Heart right ventricle (tissue), 16 donors: ENCODE measurements at regions of chr16 and their contacts with region 1.

Region 1: GRCh38 chr16:84186685-84187437 is at the start of gene TAF1C:
- DNase-seq: peak; percentile 89 to 94
- ATAC-seq: peak; percentile 92 to 98 (median 95)
- H3K4me3 ChIP-seq: peak within 1 kb of the TSS; percentile 67 to 99 (median 90)
- H3K27ac ChIP-seq: peak within 1 kb of the TSS; percentile 64 to 90 (median 85)
- H3K4me1 ChIP-seq: peaks cover 15 to 45% (median 22%) of the 10 kb centered on the region in 9 donors
- H3K27me3 ChIP-seq: no peaks in the 10 kb centered on the region
- CTCF ChIP-seq: peak; percentile 91 to 99 (median 98)
- total RNA-seq, gene TAF1C: 14.2 to 34.0 (median 20.9) TPM

Region 2: DNA sequence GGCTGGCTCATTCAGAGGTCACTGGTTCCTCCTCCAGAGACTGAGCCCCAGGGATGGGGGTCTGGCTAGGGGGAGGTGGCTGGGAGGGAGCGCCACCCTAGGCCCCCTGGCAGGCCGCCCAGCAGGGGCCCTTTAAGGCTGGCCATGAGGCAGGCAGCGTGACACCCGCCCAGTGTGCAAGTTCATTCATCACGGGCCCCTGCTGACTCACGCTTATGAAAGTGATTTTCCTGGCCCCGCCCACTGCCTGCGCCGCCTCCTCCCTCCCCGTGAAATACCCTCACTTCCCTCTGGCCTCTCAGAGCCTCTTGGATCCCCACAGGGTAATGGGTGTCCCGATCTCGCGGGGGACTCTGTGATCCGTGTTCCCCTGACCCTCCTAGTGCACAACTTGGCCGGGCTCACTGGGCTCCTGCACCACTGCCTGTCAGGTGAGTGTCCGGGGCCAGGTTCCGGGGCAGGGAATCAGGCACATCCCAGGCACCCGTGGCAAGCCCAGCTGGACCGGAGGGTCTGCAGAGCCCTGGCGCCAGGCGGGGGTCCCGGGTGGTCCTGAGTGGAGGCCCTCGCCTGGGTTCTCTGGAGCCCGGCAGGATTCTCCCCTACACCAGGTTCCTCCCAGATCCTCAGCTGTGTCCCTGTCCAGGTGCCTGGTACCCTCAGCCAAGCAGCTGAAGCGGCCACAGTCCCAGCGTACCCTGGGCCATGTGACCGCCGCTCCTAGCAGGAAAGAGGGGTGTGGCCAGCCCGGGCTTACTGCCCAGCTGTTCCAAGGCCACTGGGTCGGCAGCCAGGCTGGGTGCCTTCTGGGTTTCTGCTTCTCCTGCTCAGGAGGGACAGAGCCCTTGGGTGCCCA is 233.7 kb before region 1 on chr16 and contains the start of gene OSGIN1:
- intact Hi-C with region 1: loop called in 3 of 10 experiments (anchors 5 kb)
- DNase-seq: peak; percentile 90 to 94
- ATAC-seq: peak; percentile 90 to 96 (median 94)
- H3K4me3 ChIP-seq: peak within 1 kb of the TSS; percentile 43 to 73 (median 63)
- H3K27ac ChIP-seq: peak within 1 kb of the TSS; percentile 78 to 97 (median 92)
- H3K4me1 ChIP-seq: peaks cover 11 to 45% (median 31%) of the 10 kb centered on the region in 9 donors
- H3K27me3 ChIP-seq: no peaks in the 10 kb centered on the region
- CTCF ChIP-seq: no peak
- total RNA-seq, gene OSGIN1: 3.2 to 14.5 (median 5.3) TPM

Region 3: DNA sequence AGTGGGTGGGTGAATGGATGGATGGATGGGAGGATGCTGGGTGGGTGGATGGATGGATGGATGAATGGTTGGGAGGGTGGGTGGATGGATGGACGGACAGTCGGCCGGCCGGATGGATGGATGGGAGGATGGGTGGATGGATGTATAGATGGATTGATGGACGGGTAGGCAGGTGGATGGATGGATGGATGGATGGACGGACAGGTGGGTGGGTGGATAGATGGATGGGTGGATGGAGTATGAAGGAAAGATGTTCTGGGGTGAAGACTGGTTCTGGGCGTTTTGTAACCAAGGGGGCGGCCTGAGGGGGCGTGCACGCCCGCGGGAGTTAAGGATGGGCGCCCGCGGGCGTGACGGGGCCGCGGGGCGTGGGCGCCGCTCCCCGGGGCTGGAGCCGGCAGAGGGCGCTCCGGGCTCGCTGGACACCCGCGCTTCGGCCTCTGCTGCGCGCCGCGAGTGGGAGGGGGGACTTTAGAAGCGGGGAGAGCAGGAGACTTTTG is 219.0 kb before region 1 on chr16 and contains the start of gene NECAB2:
- intact Hi-C with region 1: loop called in 2 of 10 experiments (anchors 10 kb)
- DNase-seq: peak; percentile 40 to 62
- ATAC-seq: peak in 6 of 8 donors; percentile 22 to 65 (median 42)
- H3K4me3 ChIP-seq: peak within 1 kb of the TSS in 9 of 10 donors; percentile 29 to 47 (median 38)
- H3K27ac ChIP-seq: no peak within 1 kb of the TSS
- H3K4me1 ChIP-seq: peaks cover 0 to 10% (median 0%) of the 10 kb centered on the region in 9 donors
- H3K27me3 ChIP-seq: peaks cover 0 to 24% (median 8%) of the 10 kb centered on the region in 7 donors
- CTCF ChIP-seq: peak; percentile 33 to 81 (median 69)
- total RNA-seq, gene NECAB2: 0.32 to 1.1 (median 0.90) TPM

Region 4: DNA sequence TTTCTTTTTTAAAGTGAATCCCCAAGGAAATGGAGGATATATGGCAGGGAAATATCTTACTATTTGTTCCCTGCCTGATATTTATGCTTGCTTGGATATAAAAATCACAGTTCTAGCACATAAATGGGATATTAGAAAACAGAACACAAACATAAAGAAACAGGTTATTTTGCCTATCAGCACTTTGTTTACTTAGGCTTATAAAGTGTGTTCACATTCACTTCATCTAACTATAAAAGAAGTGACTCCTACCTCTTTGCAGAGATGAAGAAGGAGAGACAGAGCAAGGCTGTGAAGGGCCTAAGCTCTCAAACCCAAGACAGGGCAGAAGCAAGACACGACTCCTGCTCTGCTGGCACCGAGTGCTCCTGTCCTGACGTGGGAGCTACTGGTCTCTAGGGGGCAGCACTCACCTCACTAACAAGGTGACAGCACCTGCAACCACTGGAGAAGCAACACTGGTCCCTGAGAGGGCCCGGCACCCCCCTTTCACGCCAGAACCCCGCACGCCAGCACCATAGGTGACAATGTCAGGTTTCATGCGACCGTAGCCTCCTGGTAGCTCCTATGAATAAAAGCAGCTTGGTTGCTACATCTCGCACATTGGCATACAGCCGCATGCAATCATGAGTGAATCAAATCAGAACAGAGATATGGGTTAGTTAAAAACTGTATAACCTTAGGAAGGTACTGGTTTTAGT is 102.1 kb before region 1 on chr16:
- intact Hi-C with region 1: loop called in 4 of 10 experiments (anchors 5 kb)
- DNase-seq: peak; percentile 43 to 64
- ATAC-seq: peak in 7 of 8 donors; percentile 9 to 50 (median 40)
- H3K4me3 ChIP-seq: no peak overlapping the region
- H3K27ac ChIP-seq: peak overlapping the region in 6 of 10 donors; percentile 3 to 77 (median 67)
- H3K4me1 ChIP-seq: peaks cover 0 to 54% (median 25%) of the 10 kb centered on the region in 9 donors
- H3K27me3 ChIP-seq: no peaks in the 10 kb centered on the region
- CTCF ChIP-seq: peak; percentile 30 to 74 (median 66)

Region 5: GRCh38 chr16:84116720-84117493 is 70.0 kb before region 1 on chr16 and contains the start of gene MBTPS1:
- intact Hi-C with region 1: loop called in 2 of 10 experiments (anchors 2 kb)
- DNase-seq: peak; percentile 98 to 99
- ATAC-seq: peak; percentile 98 to 100 (median 99)
- H3K4me3 ChIP-seq: peak within 1 kb of the TSS; percentile 73 to 98 (median 88)
- H3K27ac ChIP-seq: peak within 1 kb of the TSS; percentile 76 to 98 (median 93)
- H3K4me1 ChIP-seq: peaks cover 2 to 42% (median 28%) of the 10 kb centered on the region in 9 donors
- H3K27me3 ChIP-seq: no peaks in the 10 kb centered on the region
- CTCF ChIP-seq: peak in 2 of 9 donors; percentile 23 to 32
- total RNA-seq, gene MBTPS1: 55.9 to 122 (median 73.5) TPM

Region 6: GRCh38 chr16:84144859-84145639 is 41.8 kb before region 1 on chr16 and contains the starts of genes DNAAF1 and HSDL1:
- intact Hi-C with region 1: loop called in 2 of 10 experiments (anchors 2 to 5 kb)
- DNase-seq: peak; percentile 90 to 95
- ATAC-seq: peak; percentile 91 to 97 (median 96)
- H3K4me3 ChIP-seq: peak within 1 kb of the TSS; percentile 71 to 99 (median 90)
- H3K27ac ChIP-seq: peak within 1 kb of the TSS in 9 of 10 donors; percentile 65 to 90 (median 81)
- H3K4me1 ChIP-seq: peaks cover 0 to 19% (median 10%) of the 10 kb centered on the region in 9 donors
- H3K27me3 ChIP-seq: peaks cover 0 to 5% (median 0%) of the 10 kb centered on the region in 7 donors
- CTCF ChIP-seq: peak in 5 of 9 donors; percentile 6 to 36 (median 21)
- total RNA-seq, gene DNAAF1: 0.23 to 0.54 (median 0.28) TPM in 3 of 10 donors, not detected in the others
- total RNA-seq, gene HSDL1: 19.4 to 38.5 (median 25.3) TPM

Region 7: DNA sequence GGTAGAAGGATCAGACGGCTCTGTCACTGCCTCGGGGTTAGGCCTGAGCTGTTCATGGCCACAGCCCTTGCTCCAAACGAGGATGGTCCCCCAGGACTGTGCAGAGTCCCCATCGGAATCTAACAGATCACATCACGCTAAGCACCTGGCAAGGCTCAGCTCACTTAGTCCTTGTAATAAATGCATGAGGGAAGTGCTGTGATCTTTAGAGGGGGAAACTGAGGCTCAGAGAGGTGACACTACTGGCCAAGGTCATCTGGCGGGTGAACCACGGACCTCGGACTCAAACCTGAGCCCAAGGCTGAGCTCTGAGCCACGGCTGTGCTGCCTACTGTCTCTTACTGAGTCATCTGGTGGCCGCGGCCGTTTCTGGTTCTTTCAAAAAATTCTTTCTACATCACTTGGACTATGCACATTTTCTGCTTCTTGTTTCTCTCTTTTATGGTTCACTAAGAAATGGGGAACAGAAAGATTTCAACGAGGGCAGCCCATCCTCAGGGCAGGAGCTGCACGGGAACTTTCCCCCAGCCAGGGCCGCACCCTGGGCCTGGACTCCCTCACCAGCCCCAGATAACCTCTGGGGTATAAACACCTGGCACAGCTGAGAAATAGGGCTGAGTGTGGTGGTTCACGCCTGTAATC is 375.4 kb after region 1 on chr16:
- intact Hi-C with region 1: no loop called
- DNase-seq: no peak
- ATAC-seq: peak in 1 of 8 donors; percentile 25
- H3K4me3 ChIP-seq: no peak overlapping the region
- H3K27ac ChIP-seq: peak overlapping the region in 1 of 10 donors; percentile 75
- H3K4me1 ChIP-seq: peaks cover 0 to 20% (median 0%) of the 10 kb centered on the region in 9 donors
- H3K27me3 ChIP-seq: peaks cover 0 to 14% (median 6%) of the 10 kb centered on the region in 7 donors
- CTCF ChIP-seq: no peak

Region 8: DNA sequence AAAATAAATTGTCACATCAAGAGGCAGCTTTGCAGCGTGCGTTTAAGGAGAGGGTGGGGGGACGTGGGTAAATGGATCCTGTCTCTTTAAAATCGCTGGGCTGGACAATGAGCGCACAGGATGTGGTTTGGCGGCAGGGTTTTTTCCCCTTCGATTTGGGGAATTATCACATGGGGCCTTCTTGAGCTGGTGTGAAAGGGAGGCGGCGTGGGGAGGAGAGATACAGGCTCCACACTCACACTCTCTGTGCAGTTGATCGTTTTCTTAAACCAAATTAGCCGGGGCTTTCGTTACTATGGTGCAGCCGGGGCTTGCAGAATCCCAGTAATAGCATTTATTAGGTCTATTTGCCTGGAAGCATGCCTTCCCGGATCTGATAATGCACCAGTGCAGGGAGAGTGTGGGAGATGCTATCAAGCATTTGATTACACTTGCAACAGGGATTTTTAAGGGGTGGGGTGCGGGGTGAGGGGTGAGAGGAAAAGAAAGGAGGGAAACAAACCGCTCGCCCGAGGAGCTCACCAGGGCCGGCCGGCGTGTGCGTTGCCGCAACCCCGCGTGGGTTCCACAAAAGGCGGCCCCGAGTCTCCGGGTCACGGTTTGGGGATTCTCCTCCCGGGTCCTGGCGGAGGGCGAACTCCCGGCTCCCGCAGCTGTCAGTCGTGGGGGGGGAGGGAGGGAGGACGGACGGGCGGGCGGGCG is 1367.4 kb after region 1 on chr16:
- intact Hi-C with region 1: loop called in 1 of 10 experiments (anchors 5 kb)
- DNase-seq: peak; percentile 53 to 82
- ATAC-seq: peak; percentile 13 to 67 (median 54)
- H3K4me3 ChIP-seq: peak overlapping the region; percentile 59 to 86 (median 77)
- H3K27ac ChIP-seq: peak overlapping the region; percentile 77 to 96 (median 94)
- H3K4me1 ChIP-seq: peaks cover 4 to 53% (median 41%) of the 10 kb centered on the region in 9 donors
- H3K27me3 ChIP-seq: no peaks in the 10 kb centered on the region
- CTCF ChIP-seq: no peak